Activated CD8-positive, alpha-beta T cell treated with anti-CD3 and anti-CD28 coated beads for 36 hours (primary cell): ENCODE measurements at regions of chr5 and their contacts with region 1.

Region 1: GRCh38 chr5:96595300-96596090 is 66.7 kb upstream of the CAST start:
- DNase-seq: peak; percentile 28
- ATAC-seq: peak; percentile 52
- H3K4me3 Mint-ChIP-seq: no peak overlapping the region
- H3K27ac Mint-ChIP-seq: no peak overlapping the region
- H3K4me1 Mint-ChIP-seq: peaks cover 17% of the 10 kb centered on the region
- H3K27me3 Mint-ChIP-seq: peaks cover 10% of the 10 kb centered on the region
- CTCF ChIP-seq: peak; percentile 70

Region 2: DNA sequence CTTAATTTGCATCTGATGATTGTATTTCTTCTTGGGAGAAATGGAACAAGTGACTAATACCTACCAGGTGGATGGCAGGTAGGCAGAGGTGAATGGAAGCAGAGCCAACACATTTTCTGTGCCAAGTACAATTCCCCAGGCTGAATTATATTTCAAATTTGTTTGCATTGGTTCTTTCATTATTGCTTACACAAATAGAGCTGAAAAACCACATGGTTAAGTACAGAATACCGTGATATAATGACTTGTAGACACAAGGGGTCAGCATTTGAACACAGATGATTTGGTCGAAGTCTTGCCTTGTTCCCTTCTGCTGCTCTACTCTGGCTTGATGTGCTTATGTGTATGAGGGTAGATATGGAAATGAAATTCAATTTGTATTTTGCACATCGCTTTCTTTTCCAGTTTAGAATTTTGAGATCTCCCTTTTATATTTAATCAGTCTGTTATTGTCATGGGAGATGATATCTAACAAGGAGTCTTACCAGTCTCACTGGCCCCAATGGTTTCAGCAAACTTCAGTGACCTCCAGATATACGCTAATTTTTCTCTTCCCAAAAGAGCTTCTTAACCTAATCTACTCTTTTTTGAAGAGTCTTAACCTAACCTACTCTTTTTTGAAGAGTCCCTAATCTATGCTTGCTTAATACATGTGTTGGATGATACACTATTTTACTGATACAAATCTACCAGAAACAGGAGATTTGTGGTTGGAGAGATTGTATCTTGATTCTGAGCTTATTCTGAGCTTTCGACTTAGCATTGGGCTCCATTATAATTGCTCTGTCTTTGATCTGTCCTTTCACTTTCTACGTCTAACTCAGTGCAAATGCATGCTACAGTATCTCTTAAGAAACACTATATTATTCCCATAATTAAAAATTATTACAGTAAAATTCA is 250.6 kb before region 1 on chr5:
- CTCF ChIA-PET with region 1: interaction called, 108 read pairs
- POLR2A ChIA-PET with region 1: interaction called, 3 read pairs
- intact Hi-C with region 1: loop called (anchors 2 kb)
- DNase-seq: peak; percentile 18
- ATAC-seq: peak; percentile 89
- H3K4me3 Mint-ChIP-seq: no peak overlapping the region
- H3K27ac Mint-ChIP-seq: no peak overlapping the region
- H3K4me1 Mint-ChIP-seq: peaks cover 14% of the 10 kb centered on the region
- H3K27me3 Mint-ChIP-seq: peaks cover 17% of the 10 kb centered on the region
- CTCF ChIP-seq: peak; percentile 56

Region 3: DNA sequence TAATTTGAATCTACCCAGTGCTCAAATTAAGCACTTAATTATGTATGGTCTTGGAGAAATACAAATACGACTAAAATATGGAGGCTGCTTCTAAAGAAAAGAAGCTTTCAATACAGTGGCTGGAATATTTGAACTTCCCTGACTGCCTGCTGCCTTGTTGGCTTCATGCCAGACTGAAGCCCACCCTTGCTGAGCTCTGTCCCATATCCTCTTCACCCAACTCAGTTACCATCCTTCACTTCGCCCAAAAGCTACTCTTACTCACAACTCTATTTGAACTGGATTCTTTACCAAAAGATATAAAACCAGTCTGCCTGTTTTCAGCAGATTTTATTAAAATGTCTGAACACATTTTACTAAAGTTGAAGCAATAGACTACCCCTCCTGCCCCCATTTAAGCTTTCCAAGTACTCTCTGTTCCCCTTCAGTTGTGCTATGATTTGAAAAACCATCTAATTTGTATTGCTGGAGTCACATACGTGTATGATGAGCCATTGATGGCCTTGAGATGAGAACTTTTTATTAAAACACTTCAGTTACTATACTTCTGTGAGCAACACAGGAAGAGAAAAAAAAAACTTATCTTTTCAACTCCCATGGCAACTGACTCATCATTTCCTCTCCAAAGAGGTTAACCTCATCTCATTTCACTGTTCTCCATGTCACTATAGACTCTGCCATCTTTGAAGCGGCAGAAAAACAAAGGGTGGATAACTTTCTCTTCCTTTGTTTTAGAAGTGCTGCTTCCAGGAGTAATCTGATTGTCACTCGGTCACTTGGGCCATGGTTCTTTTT is 58.3 kb before region 1 on chr5:
- CTCF ChIA-PET with region 1: interaction called, 3 read pairs
- POLR2A ChIA-PET with region 1: no interaction called
- intact Hi-C with region 1: loop called (anchors 5 kb)
- DNase-seq: peak; percentile 25
- ATAC-seq: peak; percentile 80
- H3K4me3 Mint-ChIP-seq: peak overlapping the region; percentile 35
- H3K27ac Mint-ChIP-seq: peak overlapping the region; percentile 96
- H3K4me1 Mint-ChIP-seq: peaks cover 42% of the 10 kb centered on the region
- H3K27me3 Mint-ChIP-seq: no peaks in the 10 kb centered on the region
- CTCF ChIP-seq: no peak

Region 4: DNA sequence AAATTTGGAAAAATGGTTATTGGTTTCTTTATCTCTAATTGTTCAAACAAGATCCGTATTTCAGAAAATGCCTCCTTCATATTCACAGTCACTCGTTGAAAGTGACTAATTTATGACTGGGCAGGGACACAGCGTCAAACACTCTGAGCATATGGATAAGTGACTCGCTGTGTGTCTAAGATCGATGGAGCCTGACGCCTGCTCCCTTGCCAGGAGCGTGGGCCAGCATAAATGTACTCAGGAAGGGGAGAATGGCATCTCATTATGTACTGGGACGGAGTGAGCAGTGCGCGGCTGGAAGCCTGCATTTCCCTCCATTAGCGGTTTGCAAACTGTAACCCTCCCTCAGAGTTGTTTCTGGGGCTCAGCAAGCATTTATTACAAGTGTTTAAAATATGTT is 13.2 kb before region 1 on chr5:
- CTCF ChIA-PET with region 1: interaction called, 16 read pairs
- POLR2A ChIA-PET with region 1: no interaction called
- intact Hi-C with region 1: no loop called
- DNase-seq: no peak
- ATAC-seq: no peak
- H3K4me3 Mint-ChIP-seq: no peak overlapping the region
- H3K27ac Mint-ChIP-seq: no peak overlapping the region
- H3K4me1 Mint-ChIP-seq: peaks cover 2% of the 10 kb centered on the region
- H3K27me3 Mint-ChIP-seq: peaks cover 13% of the 10 kb centered on the region
- CTCF ChIP-seq: no peak